ENCODE measurements at regions of chr16 and their contacts with region 1.

Region 1: DNA sequence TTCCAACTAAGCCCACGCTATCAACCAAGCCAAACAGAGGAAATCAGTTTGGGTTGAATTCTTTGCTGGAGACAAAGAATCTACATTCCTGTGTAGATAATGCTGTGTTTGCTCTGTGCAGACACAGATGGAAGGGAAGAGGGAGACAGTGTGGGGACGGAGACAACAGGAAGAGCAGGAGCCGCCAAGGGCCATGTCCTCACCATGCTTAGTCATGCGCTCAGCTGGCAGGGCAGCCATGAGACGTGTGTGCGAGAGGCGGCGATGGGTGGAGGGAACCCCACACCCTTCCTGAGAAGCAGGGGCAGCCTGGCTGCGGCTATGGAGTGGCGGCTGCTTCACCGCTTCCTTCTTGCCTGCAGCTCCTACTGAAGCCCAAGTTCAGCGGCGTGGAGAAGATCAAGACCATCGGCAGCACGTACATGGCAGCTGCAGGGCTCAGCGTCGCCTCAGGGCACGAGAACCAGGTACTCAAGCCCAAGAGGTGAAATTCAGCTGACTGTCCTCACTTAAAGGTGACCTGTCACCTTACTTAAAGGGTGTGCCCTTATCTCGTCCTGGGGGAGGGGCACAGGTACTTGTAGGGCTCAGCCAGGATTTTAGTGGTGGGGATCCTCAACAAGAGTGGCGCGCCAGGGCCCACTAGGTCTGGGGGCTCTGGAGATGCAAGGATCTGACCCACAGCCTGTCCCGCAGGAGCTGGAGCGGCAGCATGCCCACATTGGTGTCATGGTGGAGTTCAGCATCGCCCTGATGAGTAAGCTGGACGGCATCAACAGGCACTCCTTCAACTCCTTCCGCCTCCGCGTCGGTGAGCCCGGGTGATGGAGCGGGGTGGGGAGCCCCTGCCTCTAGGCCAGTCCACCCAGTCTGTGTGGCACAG is 47.5 kb downstream of the ADCY7 start:
- DNase-seq: peak in 1 of 2 experiments; percentile 16
- H3K4me3 ChIP-seq: no peak overlapping the region
- H3K27ac ChIP-seq: no peak overlapping the region
- H3K4me1 ChIP-seq: no peaks in the 10 kb centered on the region
- H3K27me3 ChIP-seq: no peaks in the 10 kb centered on the region
- CTCF ChIP-seq: no peak

Region 2: DNA sequence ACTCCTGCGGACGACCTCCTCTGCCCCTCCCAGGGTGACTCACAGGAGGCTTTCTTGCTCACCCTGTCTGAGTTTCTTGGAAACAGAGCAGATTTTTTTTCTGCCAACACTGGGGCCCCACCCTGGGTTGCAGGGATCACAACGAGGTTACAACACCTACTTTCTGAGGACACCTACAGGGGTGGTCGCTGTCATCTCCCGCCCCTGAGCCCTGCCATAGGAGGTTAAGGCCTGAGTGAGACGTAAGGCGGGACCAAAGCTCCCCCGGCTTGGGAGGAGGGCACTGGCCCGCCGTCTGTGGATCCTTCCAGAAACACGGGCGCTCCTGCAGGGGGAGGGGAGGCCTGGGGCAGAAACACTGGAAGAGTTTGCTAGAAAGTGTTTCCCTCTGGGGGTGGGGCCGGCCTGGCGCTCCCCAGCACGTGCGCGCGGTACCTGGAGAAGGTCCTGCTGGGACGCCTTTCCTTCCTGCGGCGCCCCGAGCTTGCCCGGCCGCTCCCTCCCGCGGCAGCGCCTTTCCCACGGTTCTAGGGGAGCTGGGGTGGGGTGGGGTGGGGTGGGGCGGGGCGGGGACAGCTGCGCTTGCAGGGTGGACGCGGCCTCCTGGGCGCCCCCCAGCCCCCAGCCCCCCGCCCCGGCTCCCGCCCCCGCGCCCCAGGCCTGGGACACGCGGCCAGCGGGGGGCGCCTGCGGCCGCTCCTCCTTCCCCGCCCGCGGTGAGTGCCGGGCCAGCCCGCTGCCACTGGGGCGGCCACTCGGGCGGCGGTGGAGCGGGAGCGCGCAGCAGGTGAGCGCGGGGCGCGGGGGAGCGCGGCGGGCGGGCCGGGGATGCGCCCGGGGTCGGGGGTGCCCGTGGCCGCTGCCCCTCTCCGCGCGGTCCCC is 68.2 kb before region 1 on chr16:
- CTCF ChIA-PET with region 1: no interaction called
- POLR2A ChIA-PET with region 1: interaction called, 3 read pairs
- intact Hi-C with region 1: loop called (anchors 5 kb)
- DNase-seq: peak; percentile 76 to 78
- H3K4me3 ChIP-seq: peak overlapping the region; percentile 85
- H3K27ac ChIP-seq: peak overlapping the region; percentile 75
- H3K4me1 ChIP-seq: peaks cover 7% of the 10 kb centered on the region
- H3K27me3 ChIP-seq: no peaks in the 10 kb centered on the region
- CTCF ChIP-seq: no peak

Region 3: GRCh38 chr16:50386139-50386538 is 72.3 kb after region 1 on chr16:
- CTCF ChIA-PET with region 1: no interaction called
- POLR2A ChIA-PET with region 1: no interaction called
- intact Hi-C with region 1: no loop called
- DNase-seq: no peak
- H3K4me3 ChIP-seq: no peak overlapping the region
- H3K27ac ChIP-seq: no peak overlapping the region
- H3K4me1 ChIP-seq: no peaks in the 10 kb centered on the region
- H3K27me3 ChIP-seq: no peaks in the 10 kb centered on the region
- CTCF ChIP-seq: no peak

Region 4: DNA sequence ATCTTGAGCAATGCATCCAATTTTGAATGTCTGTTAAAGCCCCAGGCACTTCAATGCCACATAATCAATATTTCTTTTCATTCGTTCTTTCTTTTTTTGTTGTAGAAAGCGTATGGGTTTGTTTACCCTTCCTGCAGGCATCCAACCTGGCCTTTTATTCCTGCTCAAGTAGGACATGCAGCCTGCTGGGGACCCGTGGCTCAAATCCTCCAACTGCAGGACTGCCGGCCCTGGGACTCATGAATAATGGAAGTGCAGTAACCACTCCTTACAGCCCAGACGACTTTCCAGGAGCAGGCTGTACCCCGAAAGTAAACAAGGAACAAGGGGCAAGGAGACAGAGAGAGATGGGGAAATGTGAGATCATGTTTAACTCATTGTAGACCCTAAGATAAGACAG is 710.9 kb after region 1 on chr16:
- CTCF ChIA-PET with region 1: no interaction called
- POLR2A ChIA-PET with region 1: no interaction called
- intact Hi-C with region 1: no loop called
- DNase-seq: no peak
- H3K4me3 ChIP-seq: no peak overlapping the region
- H3K27ac ChIP-seq: no peak overlapping the region
- H3K4me1 ChIP-seq: no peaks in the 10 kb centered on the region
- H3K27me3 ChIP-seq: peaks cover 14% of the 10 kb centered on the region; the same call in 1 of the 2 replicates
- CTCF ChIP-seq: no peak

Measured in PC-9 (cell line).